ENCODE measurements at regions of chr13 and their contacts with region 1.

Region 1: DNA sequence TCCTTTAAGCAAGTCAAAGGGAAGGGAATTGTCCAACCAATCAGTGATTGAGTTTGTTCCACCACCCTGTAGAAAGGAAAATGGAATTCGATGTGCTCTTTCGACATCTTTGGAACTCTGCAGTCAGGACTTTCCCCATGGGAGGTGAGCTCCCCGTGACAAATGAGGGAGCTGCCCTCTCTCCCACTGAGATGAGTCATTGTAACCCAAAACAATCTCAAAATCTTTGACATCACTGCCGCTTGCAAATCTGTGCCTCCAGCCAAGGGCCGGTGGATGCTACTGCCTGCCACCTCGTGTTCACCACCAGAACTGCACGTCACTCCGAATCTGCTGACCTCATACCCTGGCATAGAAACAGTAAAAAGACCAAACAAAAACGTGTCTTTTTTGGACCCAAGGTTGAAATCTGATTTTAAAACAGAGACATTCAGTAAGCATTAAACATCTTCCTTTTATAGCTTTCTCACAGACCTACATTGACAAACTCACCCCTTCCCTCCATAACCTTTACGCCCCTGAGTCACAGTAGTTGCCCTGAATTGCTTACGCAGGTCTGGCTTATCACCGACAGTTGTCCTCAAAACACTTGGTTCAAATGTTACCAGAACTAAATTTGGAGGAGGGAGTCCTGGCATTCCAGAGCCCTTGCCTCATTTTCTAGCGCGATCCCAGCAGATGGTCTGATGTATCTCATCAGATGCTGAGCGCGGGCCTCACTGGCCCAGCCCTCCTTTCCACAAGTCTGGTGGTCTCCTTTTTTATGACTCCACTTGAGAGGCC is 105.2 kb downstream of the COL4A2 start:
- H3K4me3 ChIP-seq: no peak overlapping the region
- H3K27ac ChIP-seq: no peak overlapping the region
- H3K4me1 ChIP-seq: no peaks in the 10 kb centered on the region; the same call in 1 of the 2 replicates
- CTCF ChIP-seq: no peak

Region 2: GRCh38 chr13:110298505-110299282 is 113.6 kb before region 1 on chr13:
- CTCF ChIA-PET with region 1: interaction called, 10 read pairs
- POLR2A ChIA-PET with region 1: no interaction called
- H3K4me3 ChIP-seq: no peak overlapping the region
- H3K27ac ChIP-seq: no peak overlapping the region
- H3K4me1 ChIP-seq: no peaks in the 10 kb centered on the region
- CTCF ChIP-seq: no peak